ENCODE measurements at regions of chr22 and their contacts with region 1.

Region 1: GRCh38 chr22:25202290-25202921 is 2.7 kb downstream of the CRYBB3 start:
- DNase-seq: peak; percentile 54 to 89
- H3K4me3 ChIP-seq: no peak overlapping the region
- H3K27ac ChIP-seq: no peak overlapping the region
- H3K4me1 ChIP-seq: peaks cover 0 to 2% (median 0%) of the 10 kb centered on the region in 4 experiments; a peak in 3 of 7 replicates
- H3K27me3 ChIP-seq: no peaks in the 10 kb centered on the region
- CTCF ChIP-seq: peak; percentile 83 to 94 (median 91)
- EP300 ChIP-seq: no peak
- POLR2A ChIP-seq: no peak
- RAD21 ChIP-seq: peak; percentile 89 to 96

Region 2: GRCh38 chr22:24707470-24707801 is 495.0 kb before region 1 on chr22:
- CTCF ChIA-PET with region 1: no interaction called
- POLR2A ChIA-PET with region 1: no interaction called
- DNase-seq: peak in 1 of 2 experiments; percentile 53
- H3K4me3 ChIP-seq: no peak overlapping the region
- H3K27ac ChIP-seq: no peak overlapping the region
- H3K4me1 ChIP-seq: peaks cover 0 to 10% (median 4%) of the 10 kb centered on the region in 4 experiments; a peak in 4 of 7 replicates
- H3K27me3 ChIP-seq: no peaks in the 10 kb centered on the region
- CTCF ChIP-seq: peak in 2 of 3 experiments; percentile 15 to 37; a peak in 2 of 4 replicates
- EP300 ChIP-seq: no peak
- POLR2A ChIP-seq: no peak
- RAD21 ChIP-seq: peak in 1 of 2 experiments; percentile 34; a peak in 1 of 4 replicates

Region 3: DNA sequence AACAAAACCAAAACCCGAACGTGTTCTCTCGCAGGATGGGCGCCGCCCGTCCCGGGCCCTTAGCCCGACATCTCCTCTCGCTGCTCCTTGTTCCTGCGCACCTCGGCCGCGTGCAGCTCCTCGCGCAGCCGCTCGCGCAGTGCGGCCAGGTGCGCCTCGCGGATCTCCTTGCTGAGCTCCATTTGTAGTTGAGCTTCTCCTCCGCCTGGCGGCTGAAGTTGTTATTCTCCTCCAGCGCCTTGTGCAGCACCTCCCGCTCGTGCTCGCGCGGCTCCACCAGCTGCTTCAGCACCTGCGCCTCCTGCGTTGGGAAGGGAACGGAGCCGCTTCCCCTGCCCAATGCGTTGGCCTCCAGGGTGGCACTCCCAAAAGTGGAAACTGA is 23.2 kb before region 1 on chr22:
- CTCF ChIA-PET with region 1: interaction called, 13 read pairs
- POLR2A ChIA-PET with region 1: no interaction called
- DNase-seq: peak; percentile 13 to 69
- H3K4me3 ChIP-seq: no peak overlapping the region
- H3K27ac ChIP-seq: no peak overlapping the region
- H3K4me1 ChIP-seq: 0 out of 7 replicates have a peak, but pooled peaks cover 0 to 4% (median 0%) of the 10 kb centered on the region in 4 experiments
- H3K27me3 ChIP-seq: no peaks in the 10 kb centered on the region
- CTCF ChIP-seq: peak; percentile 54 to 73 (median 59)
- EP300 ChIP-seq: no peak
- POLR2A ChIP-seq: no peak
- RAD21 ChIP-seq: peak; percentile 46 to 57; a peak in 3 of 4 replicates

Measured in H1 (cell line).